Pancreas (tissue), 10 donors: ENCODE measurements at regions of chr10 and their contacts with region 1.

Region 1: DNA sequence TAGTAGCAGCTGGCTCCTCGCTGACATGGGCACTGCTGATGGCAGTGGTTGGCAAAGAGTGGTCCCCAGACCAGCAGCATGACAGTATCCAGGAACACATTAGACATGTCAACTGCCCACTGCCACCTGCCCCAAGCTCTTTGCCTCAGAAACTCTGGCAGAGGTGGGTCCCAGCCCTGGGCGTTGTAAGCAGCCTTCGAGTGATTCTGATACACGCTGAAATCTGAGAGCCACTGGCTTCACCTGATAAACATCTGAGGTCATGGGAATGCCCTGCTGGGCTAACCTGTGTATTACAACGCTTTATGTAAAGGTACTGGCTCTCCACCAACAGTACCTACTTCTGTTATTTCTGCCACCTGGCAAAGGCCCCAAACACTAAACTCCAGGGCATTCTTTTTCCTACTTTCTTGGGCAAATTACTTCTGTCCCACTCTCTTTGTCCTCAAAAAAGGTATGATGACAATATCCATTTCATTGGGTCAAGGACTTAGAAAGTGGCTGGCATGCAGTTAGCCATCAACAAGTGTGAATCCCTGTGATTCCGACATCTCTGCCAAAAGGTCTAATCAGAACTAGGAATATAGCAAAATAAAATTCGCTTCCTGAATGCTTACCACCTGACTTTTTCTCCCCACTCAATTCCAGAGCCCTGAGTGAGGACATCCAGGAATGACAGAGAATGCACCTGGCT is 9.2 kb downstream of the SGMS1 start:
- DNase-seq: peak in 2 of 6 donors; percentile 39 to 49
- ATAC-seq: peak; percentile 65 to 83 (median 74)
- H3K4me3 ChIP-seq: no peak overlapping the region
- H3K27ac ChIP-seq: peak overlapping the region in 3 of 4 donors; percentile 13 to 67 (median 37)
- H3K4me1 ChIP-seq: peaks cover 22 to 60% (median 43%) of the 10 kb centered on the region in 3 donors
- H3K27me3 ChIP-seq: no peaks in the 10 kb centered on the region
- CTCF ChIP-seq: peak in 1 of 4 donors; percentile 35

Region 2: DNA sequence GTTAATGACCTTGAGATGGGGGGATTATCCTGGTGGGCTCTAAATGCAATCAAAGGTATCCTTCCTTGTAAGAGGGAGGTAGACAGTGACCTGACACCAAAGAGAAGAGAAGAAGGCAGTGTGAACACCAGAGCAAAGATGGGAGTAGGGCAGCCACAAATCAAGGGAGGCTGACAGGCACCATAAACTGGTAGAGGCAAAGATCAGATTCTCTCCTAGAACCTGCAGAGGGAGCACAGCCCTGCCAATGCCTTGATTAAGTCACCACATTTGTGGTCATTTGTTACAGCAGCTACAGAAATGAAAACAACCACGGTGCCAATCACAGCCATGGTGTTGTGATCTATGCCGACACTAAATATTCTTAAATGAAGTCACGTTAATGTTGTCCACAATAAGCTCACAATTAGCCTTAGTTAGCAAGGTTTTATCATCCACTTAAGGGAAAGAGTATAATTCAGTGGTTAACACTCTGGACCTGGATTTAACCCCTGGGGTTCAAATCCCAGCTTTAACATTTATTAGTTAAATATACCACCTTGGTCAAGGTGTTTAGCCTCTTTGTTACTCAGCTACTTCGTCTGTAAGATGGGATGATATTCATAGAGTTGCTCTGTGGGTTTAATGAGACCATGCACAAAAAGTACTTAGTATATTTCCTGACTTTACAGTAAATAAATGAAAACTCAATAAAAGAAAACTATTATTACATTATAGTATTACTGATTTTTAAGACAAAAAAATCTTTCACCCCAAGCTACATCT is 61.6 kb before region 1 on chr10:
- intact Hi-C with region 1: loop called in 1 of 3 experiments (anchors 10 kb)
- DNase-seq: no peak
- ATAC-seq: peak in 2 of 4 donors; percentile 38 to 49
- H3K4me3 ChIP-seq: no peak overlapping the region
- H3K27ac ChIP-seq: no peak overlapping the region
- H3K4me1 ChIP-seq: peaks cover 13 to 47% (median 38%) of the 10 kb centered on the region in 3 donors
- H3K27me3 ChIP-seq: no peaks in the 10 kb centered on the region
- CTCF ChIP-seq: no peak

Region 3: GRCh38 chr10:50567384-50567783 is 47.2 kb before region 1 on chr10:
- intact Hi-C with region 1: loop called in 1 of 3 experiments (anchors 5 kb)
- DNase-seq: peak in 5 of 6 donors; percentile 33 to 62 (median 53)
- ATAC-seq: peak; percentile 65 to 83 (median 78)
- H3K4me3 ChIP-seq: no peak overlapping the region
- H3K27ac ChIP-seq: no peak overlapping the region
- H3K4me1 ChIP-seq: peaks cover 21 to 50% (median 22%) of the 10 kb centered on the region in 3 donors
- H3K27me3 ChIP-seq: no peaks in the 10 kb centered on the region
- CTCF ChIP-seq: no peak